SK-N-SH (cell line): ENCODE measurements at regions of chr19 and their contacts with region 1.

Region 1: GRCh38 chr19:11924886-11925650 is at the start of gene ZNF700:
- DNase-seq: peak; percentile 94
- H3K4me3 ChIP-seq: peak within 1 kb of the TSS; percentile 72 to 95
- H3K27ac ChIP-seq: peak within 1 kb of the TSS; percentile 47 to 85; a peak in 3 of 4 replicates
- H3K4me1 ChIP-seq: peaks cover 0 to 2% of the 10 kb centered on the region in 2 experiments; a peak in 1 of 4 replicates
- H3K27me3 ChIP-seq: no peaks in the 10 kb centered on the region
- CTCF ChIP-seq: no peak
- EP300 ChIP-seq: no peak
- RAD21 ChIP-seq: no peak
- polyA plus RNA-seq, gene ZNF700: 3.5 and 4.4 TPM in 2 replicates

Region 2: DNA sequence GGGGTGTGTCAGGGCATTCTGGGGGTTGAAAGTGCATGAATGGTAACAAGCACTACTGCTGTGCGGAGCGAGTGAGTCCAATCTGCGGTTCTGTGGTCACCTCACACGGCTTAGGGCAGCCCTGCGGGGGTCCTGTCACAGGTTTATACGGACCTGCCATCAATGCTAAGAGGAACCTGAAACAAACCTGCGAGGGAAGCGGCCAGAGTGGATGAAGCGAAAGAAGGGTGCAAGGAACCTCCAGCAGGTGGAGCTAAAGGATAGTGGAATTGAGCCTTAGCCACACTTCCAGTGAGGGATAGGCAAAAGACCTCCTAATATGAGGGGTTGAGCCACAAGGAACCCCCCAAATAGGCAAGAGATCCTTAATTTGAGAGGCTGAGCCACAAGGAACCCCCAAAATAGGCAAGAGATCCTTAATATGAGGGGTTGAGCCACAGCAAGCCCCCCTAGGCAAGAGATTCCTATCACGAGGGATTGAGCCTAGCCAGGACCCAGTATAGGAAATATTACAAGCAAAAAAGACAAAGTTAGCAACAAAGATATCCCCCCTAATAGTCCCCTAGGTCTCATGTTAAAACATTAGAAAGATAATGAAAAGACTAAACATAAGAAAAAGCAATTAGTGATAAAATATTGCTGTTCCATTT is 43.8 kb before region 1 on chr19:
- CTCF ChIA-PET with region 1: interaction called, 11 read pairs
- POLR2A ChIA-PET with region 1: no interaction called
- DNase-seq: peak; percentile 70
- H3K4me3 ChIP-seq: no peak overlapping the region
- H3K27ac ChIP-seq: no peak overlapping the region
- H3K4me1 ChIP-seq: no peaks in the 10 kb centered on the region
- H3K27me3 ChIP-seq: no peaks in the 10 kb centered on the region
- CTCF ChIP-seq: peak; percentile 59
- EP300 ChIP-seq: no peak
- RAD21 ChIP-seq: peak; percentile 83

Region 3: DNA sequence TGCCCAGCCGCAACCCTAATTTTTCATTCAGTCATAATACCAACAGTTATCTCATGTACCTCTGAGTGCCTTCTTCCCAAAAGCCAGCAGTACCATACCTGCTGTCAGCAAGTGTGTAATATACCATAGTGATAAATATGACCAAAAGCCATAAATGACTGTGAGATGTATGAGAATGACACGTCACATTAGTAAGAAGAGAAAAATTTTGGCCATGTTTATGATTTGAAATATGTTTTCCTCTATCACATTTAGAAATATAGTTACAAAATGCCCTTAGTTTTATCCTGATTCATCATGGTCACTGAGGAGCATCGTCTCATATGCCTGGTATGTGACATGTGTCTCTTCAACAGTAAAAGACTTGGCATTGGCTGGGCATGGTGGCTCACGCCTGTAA is 11.4 kb before region 1 on chr19:
- CTCF ChIA-PET with region 1: interaction called, 11 read pairs
- POLR2A ChIA-PET with region 1: no interaction called
- DNase-seq: no peak
- H3K4me3 ChIP-seq: no peak overlapping the region
- H3K27ac ChIP-seq: no peak overlapping the region
- H3K4me1 ChIP-seq: no peaks in the 10 kb centered on the region
- H3K27me3 ChIP-seq: no peaks in the 10 kb centered on the region
- CTCF ChIP-seq: no peak
- EP300 ChIP-seq: no peak
- RAD21 ChIP-seq: no peak

Region 4: DNA sequence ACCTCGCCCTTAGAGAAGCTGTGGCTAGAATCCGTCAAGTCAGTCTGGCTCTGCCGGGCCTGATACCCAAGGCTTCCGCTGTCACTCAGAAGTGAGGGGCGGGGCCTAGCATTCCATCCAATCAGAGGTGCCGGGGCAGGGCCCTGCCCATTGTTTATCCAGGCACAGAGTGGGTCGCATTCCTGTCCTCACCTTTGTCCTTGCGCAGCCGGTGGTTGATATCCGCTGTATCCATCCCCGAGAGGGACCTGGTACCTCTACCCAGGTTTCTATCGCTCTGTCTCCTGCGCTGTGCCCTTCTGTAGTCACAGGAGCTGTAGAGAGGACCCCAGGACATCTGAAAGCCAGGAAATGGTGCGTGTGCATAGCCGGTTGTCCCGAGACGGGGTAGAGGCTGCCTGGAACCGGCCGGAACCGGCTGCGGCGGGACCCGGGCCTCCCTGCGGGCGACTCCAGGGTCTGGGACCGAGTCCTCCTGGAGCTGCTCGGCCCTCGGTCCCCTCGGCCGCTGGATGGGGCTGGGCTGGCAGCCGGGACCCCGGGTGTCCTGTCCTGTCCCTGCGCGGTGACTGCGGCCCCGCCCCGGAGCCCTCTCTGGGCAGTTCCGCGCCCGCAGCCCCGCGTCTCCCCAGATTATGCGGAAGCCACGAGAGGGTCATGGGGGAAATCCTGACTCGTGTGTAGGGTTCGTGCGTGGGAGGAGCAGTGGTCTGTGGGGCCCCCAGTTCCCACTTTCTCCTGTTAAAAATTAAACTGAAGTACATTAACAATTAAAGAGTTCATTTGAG is 40.0 kb after region 1 on chr19 and contains the start of gene ZNF763:
- CTCF ChIA-PET with region 1: interaction called, 16 read pairs
- POLR2A ChIA-PET with region 1: interaction called, 4 read pairs
- DNase-seq: peak; percentile 92
- H3K4me3 ChIP-seq: peak within 1 kb of the TSS; percentile 65
- H3K27ac ChIP-seq: peak within 1 kb of the TSS; percentile 30 to 72
- H3K4me1 ChIP-seq: peaks cover 0 to 7% of the 10 kb centered on the region in 2 experiments; a peak in 1 of 4 replicates
- H3K27me3 ChIP-seq: no peaks in the 10 kb centered on the region
- CTCF ChIP-seq: no peak
- EP300 ChIP-seq: no peak
- RAD21 ChIP-seq: no peak
- polyA plus RNA-seq, gene ZNF763: 0.55 and 0.72 TPM in 2 replicates

Region 5: DNA sequence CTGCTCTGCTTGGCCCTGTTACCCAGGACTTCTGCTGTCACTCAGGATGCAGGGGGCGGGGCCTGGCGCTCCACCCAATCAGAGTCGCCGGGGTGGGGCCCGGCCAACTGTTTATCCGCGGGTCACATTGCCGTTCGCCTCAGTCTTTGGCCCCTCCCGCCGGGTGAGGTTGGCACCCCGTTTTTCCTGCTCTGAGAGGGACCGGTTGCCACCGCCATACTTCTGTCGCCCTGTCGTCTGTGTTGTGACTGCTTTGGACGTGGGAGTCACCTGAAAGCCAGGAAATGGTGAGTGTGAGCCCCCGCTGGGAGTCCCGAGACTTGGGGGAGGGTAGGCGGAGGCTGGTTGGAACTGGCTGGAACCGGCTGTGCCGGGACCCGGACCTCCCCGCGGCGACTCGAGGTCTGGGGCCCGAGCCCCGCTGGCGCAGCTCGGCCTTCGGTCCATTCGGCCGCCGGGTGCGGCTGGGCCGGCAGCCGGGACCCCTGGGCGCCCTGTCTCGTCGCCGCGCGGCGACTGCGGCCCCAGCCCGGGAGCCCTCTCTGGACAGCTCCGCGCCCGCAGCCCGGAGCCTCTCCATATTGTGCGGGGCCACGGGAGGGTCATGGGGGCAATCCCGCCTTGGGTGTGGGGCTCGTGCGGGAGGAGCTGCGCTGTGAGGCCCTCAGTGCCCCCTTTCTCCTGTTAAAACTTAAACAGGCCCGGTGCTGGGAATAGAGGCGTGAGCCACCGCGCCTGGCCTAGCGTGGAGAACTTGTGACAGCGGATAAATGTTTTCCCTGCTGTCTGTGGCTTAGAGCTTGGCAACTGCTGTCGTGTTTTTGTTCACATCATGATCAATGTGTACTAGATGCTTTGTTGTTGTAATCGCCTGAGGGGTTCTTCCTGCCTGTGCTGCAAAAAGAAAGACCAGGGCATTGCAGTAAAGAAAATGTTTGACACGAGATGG is 139.8 kb after region 1 on chr19 and contains the start of gene ZNF844:
- CTCF ChIA-PET with region 1: interaction called, 13 read pairs
- POLR2A ChIA-PET with region 1: no interaction called
- DNase-seq: peak; percentile 97
- H3K4me3 ChIP-seq: peak within 1 kb of the TSS; percentile 55 to 69
- H3K27ac ChIP-seq: peak within 1 kb of the TSS in 1 of 2 experiments; percentile 67; a peak in 1 of 4 replicates
- H3K4me1 ChIP-seq: no peaks in the 10 kb centered on the region; a peak in 1 of 4 replicates
- H3K27me3 ChIP-seq: no peaks in the 10 kb centered on the region
- CTCF ChIP-seq: no peak
- EP300 ChIP-seq: no peak
- RAD21 ChIP-seq: no peak
- polyA plus RNA-seq, gene ZNF844: 0.28 and 0.31 TPM in 2 replicates